Right ventricle myocardium inferior (tissue), 1 donor: ENCODE measurements at regions of chr18 and their contacts with region 1.

Region 1: GRCh38 chr18:55988537-55988936 is 400.5 kb upstream of the TCF4 start:
- DNase-seq: no peak
- ATAC-seq: peak; percentile 69

Region 2: GRCh38 chr18:55833543-55833942 is 155.0 kb before region 1 on chr18:
- intact Hi-C with region 1: no loop called
- DNase-seq: no peak
- ATAC-seq: no peak

Region 3: DNA sequence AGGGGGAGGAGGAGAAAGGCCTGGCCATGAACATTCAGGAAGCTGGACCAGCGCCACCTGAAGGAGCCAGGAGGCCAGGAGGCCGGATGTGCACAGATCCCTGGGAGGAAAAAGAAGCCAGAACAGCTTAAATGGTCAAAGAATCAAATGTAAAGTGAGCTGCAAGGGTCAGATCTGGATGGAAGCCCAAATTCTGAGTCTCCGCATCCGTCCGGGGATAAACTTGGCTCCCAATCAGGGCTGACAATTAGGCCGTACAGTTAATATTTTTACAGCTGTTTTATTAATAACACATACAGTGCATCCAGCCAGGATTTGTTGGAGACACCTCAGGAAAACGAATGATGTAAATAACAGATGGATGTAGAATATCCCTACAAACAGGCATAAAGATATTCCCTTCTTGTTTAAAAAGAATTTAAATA is 94.6 kb after region 1 on chr18:
- intact Hi-C with region 1: loop called (anchors 5 kb)
- DNase-seq: peak; percentile 57
- ATAC-seq: peak; percentile 77

Region 4: DNA sequence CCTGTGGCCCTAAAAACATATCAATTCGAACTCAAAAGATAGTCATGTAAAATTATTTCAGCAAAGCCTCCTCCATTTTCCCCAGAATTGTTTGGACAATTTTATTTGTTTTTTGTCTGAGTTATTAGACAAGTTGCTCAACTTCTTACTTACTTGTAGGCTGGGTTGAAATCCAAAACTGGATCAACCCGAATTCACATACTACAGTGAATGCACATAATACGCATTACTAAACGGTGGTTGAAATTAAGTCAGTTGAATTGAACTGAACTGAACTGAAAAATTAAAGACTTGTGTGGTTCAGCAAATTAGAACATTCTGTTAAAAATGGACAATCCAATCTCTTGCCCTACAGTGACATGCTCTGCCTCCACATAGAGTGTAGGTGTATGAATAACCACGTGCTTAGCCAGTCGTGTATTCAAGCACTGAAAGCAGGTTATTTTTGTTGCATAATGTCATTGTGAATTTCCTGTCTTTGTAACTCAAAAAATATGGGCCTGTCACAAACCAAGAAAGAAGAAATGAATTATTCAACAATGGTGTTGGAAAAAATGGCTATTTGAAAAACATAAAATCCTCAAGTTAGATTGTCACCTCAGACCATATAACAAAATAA is 208.8 kb after region 1 on chr18:
- intact Hi-C with region 1: loop called (anchors 10 kb)
- DNase-seq: no peak
- ATAC-seq: no peak